Breast epithelium (tissue), 4 donors: ENCODE measurements at regions of chr2 and their contacts with region 1.

Region 1: DNA sequence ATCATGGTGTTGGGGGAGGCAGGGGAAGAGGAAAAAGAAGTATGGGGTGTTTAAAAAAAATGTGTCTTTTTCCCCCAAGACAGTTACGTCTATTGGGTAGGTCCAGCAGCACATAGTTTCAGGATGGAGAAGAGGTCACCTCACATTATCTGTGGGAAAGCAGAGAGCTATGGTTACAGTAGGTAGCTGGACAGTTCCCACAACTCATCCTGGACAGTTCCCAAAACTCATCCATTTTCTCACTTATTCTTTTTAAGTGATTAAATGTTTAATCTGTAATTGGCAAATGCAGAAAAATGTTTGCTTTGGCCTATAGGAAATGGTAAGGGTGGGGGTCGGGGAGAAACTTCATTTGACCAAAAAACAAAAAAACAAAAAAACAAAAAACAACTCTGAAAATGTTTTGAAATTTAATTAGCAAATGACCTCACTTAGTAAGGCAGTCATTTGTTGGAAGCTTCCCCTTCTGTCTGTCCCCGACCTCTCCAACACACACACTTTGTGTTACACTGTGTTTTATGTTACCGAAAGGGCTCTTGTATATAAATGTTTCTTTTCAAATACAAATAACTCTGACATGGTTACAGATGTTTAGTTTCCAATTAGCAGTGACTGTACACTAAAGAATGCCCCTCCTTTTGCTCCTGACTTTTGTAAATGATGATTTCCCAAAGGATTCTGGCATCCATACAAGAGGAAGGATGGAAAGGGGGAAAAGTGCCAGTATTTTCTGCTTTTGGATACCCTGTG is 173.3 kb upstream of the ZFP36L2 start:
- DNase-seq: no peak
- H3K4me3 ChIP-seq: no peak overlapping the region
- H3K27ac ChIP-seq: peak overlapping the region; percentile 30 to 81
- H3K4me1 ChIP-seq: no peaks in the 10 kb centered on the region
- H3K27me3 ChIP-seq: no peaks in the 10 kb centered on the region
- CTCF ChIP-seq: no peak
- POLR2A ChIP-seq: no peak

Region 2: GRCh38 chr2:43305517-43305916 is 94.2 kb before region 1 on chr2:
- intact Hi-C with region 1: loop called (anchors 5 kb)
- DNase-seq: no peak
- H3K4me3 ChIP-seq: no peak overlapping the region
- H3K27ac ChIP-seq: peak overlapping the region; percentile 78 to 89
- H3K4me1 ChIP-seq: peaks cover 0 to 8% of the 10 kb centered on the region in 2 donors
- H3K27me3 ChIP-seq: no peaks in the 10 kb centered on the region
- CTCF ChIP-seq: no peak
- POLR2A ChIP-seq: no peak